ENCODE measurements at regions of chr12 and their contacts with region 1.

Region 1: DNA sequence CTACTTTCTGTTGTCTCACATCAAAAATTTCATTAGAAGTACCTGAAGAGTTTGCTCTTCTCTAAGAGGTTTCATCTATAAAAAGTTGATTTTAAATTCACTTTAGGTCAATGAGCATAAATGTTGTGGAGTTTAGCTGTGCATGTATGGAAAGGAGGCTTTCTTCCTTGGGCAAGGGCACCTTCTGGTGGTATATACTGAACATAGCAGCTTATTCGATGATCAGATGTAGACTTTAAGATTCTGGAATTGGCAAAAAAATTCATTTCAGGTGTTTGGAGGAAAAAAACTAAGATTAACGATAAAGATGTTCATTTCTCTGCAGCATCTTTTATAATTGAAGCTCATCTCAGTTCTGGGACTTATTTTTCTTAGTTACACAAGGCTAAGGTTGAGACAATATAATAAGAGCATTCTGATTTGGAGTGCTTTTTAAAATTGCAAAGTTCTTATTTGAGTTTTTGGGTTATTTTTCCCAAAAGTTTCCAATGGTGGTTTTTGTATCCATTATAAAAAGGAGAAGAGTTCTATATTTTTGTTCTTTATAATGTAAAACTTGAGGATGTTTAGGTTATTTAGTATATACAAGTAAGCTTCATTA is 46.8 kb downstream of the TMEM117 start:
- DNase-seq: peak in 5 of 9 experiments; percentile 9 to 72 (median 29)
- ATAC-seq: peak; percentile 96
- H3K4me3 ChIP-seq: no peak overlapping the region
- H3K4me3 Mint-ChIP-seq: no peak overlapping the region
- H3K27ac ChIP-seq: no peak overlapping the region
- H3K27ac Mint-ChIP-seq: no peak overlapping the region
- H3K4me1 ChIP-seq: no peaks in the 10 kb centered on the region
- H3K4me1 Mint-ChIP-seq: no peaks in the 10 kb centered on the region
- H3K27me3 ChIP-seq: no peaks in the 10 kb centered on the region
- H3K27me3 Mint-ChIP-seq: no peaks in the 10 kb centered on the region
- CTCF ChIP-seq: peak; percentile 94

Region 2: GRCh38 chr12:43370260-43370659 is 512.4 kb before region 1 on chr12:
- CTCF ChIA-PET with region 1: no interaction called
- POLR2A ChIA-PET with region 1: no interaction called
- intact Hi-C with region 1: no loop called
- DNase-seq: no peak
- ATAC-seq: no peak
- H3K4me3 ChIP-seq: no peak overlapping the region
- H3K4me3 Mint-ChIP-seq: no peak overlapping the region
- H3K27ac ChIP-seq: no peak overlapping the region
- H3K27ac Mint-ChIP-seq: no peak overlapping the region
- H3K4me1 ChIP-seq: no peaks in the 10 kb centered on the region
- H3K4me1 Mint-ChIP-seq: no peaks in the 10 kb centered on the region
- H3K27me3 ChIP-seq: no peaks in the 10 kb centered on the region
- H3K27me3 Mint-ChIP-seq: no peaks in the 10 kb centered on the region
- CTCF ChIP-seq: no peak

Region 3: DNA sequence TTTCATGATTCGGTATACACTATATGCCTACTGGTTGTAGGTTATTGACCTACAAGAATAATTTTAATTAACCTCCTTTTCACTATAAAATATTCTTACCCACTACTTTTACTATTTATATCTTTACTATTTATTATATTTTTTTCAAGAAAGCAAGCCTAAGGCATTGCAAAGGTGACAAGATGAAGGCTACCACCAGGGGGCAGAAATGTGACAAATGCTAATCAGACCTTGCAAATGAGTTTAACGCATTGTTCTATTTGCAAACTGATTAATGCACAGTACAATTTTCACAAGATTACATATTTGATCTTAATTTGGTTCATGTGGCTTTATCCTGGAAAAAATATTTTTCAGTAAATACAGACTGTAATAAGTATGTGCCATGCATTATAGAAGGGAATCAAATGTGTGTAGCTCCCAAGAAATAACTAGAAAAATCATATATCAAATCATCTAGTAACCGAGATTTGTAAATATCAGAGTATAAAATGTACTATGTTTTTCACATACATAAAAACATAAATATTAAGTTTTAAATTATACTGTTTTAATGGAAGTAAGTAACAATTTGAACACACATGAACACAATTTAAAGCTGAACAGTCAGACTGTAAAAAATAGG is 437.6 kb before region 1 on chr12:
- CTCF ChIA-PET with region 1: interaction called, 21 read pairs
- POLR2A ChIA-PET with region 1: no interaction called
- intact Hi-C with region 1: loop called in 1 of 2 experiments (anchors 1 kb)
- DNase-seq: peak; percentile 5 to 54 (median 46)
- ATAC-seq: peak; percentile 36
- H3K4me3 ChIP-seq: no peak overlapping the region
- H3K4me3 Mint-ChIP-seq: no peak overlapping the region
- H3K27ac ChIP-seq: no peak overlapping the region
- H3K27ac Mint-ChIP-seq: no peak overlapping the region
- H3K4me1 ChIP-seq: no peaks in the 10 kb centered on the region
- H3K4me1 Mint-ChIP-seq: no peaks in the 10 kb centered on the region
- H3K27me3 ChIP-seq: no peaks in the 10 kb centered on the region
- H3K27me3 Mint-ChIP-seq: peaks cover 2% of the 10 kb centered on the region
- CTCF ChIP-seq: peak; percentile 70

Region 4: GRCh38 chr12:43516045-43516444 is 366.6 kb before region 1 on chr12:
- CTCF ChIA-PET with region 1: no interaction called
- POLR2A ChIA-PET with region 1: no interaction called
- intact Hi-C with region 1: no loop called
- DNase-seq: no peak
- ATAC-seq: no peak
- H3K4me3 ChIP-seq: no peak overlapping the region
- H3K4me3 Mint-ChIP-seq: no peak overlapping the region
- H3K27ac ChIP-seq: no peak overlapping the region
- H3K27ac Mint-ChIP-seq: no peak overlapping the region
- H3K4me1 ChIP-seq: no peaks in the 10 kb centered on the region
- H3K4me1 Mint-ChIP-seq: no peaks in the 10 kb centered on the region
- H3K27me3 ChIP-seq: no peaks in the 10 kb centered on the region
- H3K27me3 Mint-ChIP-seq: no peaks in the 10 kb centered on the region
- CTCF ChIP-seq: no peak

Region 5: DNA sequence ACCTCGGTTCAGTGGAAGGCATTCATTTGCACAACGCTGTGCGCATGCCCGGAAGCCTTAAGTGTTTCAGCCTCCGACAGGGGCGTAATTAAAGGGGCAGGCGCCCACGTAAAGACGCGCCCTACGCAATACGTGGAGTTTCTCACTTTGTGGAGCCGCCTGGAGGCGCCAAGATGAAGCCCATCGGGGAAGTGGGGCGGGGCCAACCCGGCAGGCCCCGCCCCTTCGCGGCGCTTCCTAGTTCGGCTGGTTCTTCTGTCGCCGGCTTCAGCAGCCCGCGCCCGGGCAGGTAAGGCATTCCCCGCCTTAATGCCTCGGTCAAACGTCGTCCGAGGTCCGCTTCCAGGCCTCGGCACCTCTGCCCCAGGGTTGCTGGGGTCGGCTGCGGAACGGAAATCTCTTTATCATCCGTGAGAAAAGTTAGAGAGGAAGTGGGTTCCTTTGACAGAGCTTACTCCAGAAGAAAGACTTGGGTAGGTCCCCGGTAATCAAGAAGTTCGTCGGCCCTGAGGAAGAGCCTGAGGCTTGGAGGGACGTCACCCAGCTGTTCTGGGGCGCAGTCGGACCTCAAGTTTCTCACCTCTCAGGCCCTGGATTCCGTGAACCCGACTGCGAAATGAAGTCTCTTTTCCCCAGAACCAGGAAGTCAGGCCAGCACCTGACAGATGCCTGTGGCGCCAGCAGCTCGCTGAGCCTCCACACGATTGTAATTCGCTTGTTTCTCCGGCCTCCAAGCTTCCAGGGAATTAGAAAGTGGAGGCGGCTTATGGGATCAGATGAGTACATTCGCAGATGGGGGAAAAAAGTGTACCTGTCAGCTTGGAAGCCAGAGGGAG is 123.7 kb before region 1 on chr12 and contains the starts of genes IRAK4 and PUS7L:
- CTCF ChIA-PET with region 1: interaction called, 8 read pairs
- POLR2A ChIA-PET with region 1: interaction called, 3 read pairs
- intact Hi-C with region 1: loop called in 1 of 2 experiments (anchors 5 kb)
- DNase-seq: peak; percentile 89 to 99 (median 95)
- ATAC-seq: peak; percentile 95
- H3K4me3 ChIP-seq: peak within 1 kb of the TSS; percentile 71 to 79
- H3K4me3 Mint-ChIP-seq: peak within 1 kb of the TSS; percentile 95
- H3K27ac ChIP-seq: peak within 1 kb of the TSS; percentile 80 to 96
- H3K27ac Mint-ChIP-seq: peak within 1 kb of the TSS; percentile 99
- H3K4me1 ChIP-seq: peaks cover 45% of the 10 kb centered on the region
- H3K4me1 Mint-ChIP-seq: peaks cover 77% of the 10 kb centered on the region
- H3K27me3 ChIP-seq: no peaks in the 10 kb centered on the region
- H3K27me3 Mint-ChIP-seq: no peaks in the 10 kb centered on the region
- CTCF ChIP-seq: no peak
- total RNA-seq, gene IRAK4: 19.6 to 22.3 TPM
- total RNA-seq, gene PUS7L: 10.3 to 12.6 TPM

Region 6: GRCh38 chr12:43805860-43806736 is 76.6 kb before region 1 on chr12 and contains the start of gene TWF1:
- CTCF ChIA-PET with region 1: interaction called, 5 read pairs
- POLR2A ChIA-PET with region 1: interaction called, 3 read pairs
- intact Hi-C with region 1: loop called in 1 of 2 experiments (anchors 1 kb)
- DNase-seq: peak; percentile 69 to 93 (median 83)
- ATAC-seq: peak; percentile 85
- H3K4me3 ChIP-seq: peak within 1 kb of the TSS; percentile 85 to 88
- H3K4me3 Mint-ChIP-seq: peak within 1 kb of the TSS; percentile 100
- H3K27ac ChIP-seq: peak within 1 kb of the TSS; percentile 94 to 97
- H3K27ac Mint-ChIP-seq: peak within 1 kb of the TSS; percentile 100
- H3K4me1 ChIP-seq: peaks cover 36% of the 10 kb centered on the region
- H3K4me1 Mint-ChIP-seq: peaks cover 42% of the 10 kb centered on the region
- H3K27me3 ChIP-seq: no peaks in the 10 kb centered on the region
- H3K27me3 Mint-ChIP-seq: no peaks in the 10 kb centered on the region
- CTCF ChIP-seq: no peak
- total RNA-seq, gene TWF1: 74.1 to 82.2 TPM

Region 7: GRCh38 chr12:43937947-43938346 is 55.3 kb after region 1 on chr12:
- CTCF ChIA-PET with region 1: no interaction called
- POLR2A ChIA-PET with region 1: no interaction called
- intact Hi-C with region 1: no loop called
- DNase-seq: no peak
- ATAC-seq: no peak
- H3K4me3 ChIP-seq: no peak overlapping the region
- H3K4me3 Mint-ChIP-seq: no peak overlapping the region
- H3K27ac ChIP-seq: no peak overlapping the region
- H3K27ac Mint-ChIP-seq: no peak overlapping the region
- H3K4me1 ChIP-seq: no peaks in the 10 kb centered on the region
- H3K4me1 Mint-ChIP-seq: no peaks in the 10 kb centered on the region
- H3K27me3 ChIP-seq: no peaks in the 10 kb centered on the region
- H3K27me3 Mint-ChIP-seq: no peaks in the 10 kb centered on the region
- CTCF ChIP-seq: no peak

Measured in CD8-positive, alpha-beta T cell (primary cell).